Common myeloid progenitor, CD34-positive (primary cell): ENCODE measurements at regions of chr17 and their contacts with region 1.

Region 1: GRCh38 chr17:64399071-64399766 is 8.6 kb upstream of the PECAM1 start:
- DNase-seq: no peak
- H3K4me3 ChIP-seq: peak overlapping the region in 1 of 7 experiments; percentile 23
- H3K27ac ChIP-seq: no peak overlapping the region
- H3K4me1 ChIP-seq: peaks cover 24 to 79% (median 66%) of the 10 kb centered on the region in 4 experiments
- H3K27me3 ChIP-seq: no peaks in the 10 kb centered on the region

Region 2: GRCh38 chr17:64411999-64412771 is 13.0 kb after region 1 on chr17:
- CTCF ChIA-PET with region 1: interaction called, 22 read pairs
- POLR2A ChIA-PET with region 1: no interaction called
- DNase-seq: peak; percentile 64 to 91 (median 86)
- H3K4me3 ChIP-seq: peak overlapping the region; percentile 2 to 73 (median 49)
- H3K27ac ChIP-seq: peak overlapping the region; percentile 4 to 77
- H3K4me1 ChIP-seq: peaks cover 13 to 46% (median 39%) of the 10 kb centered on the region in 4 experiments
- H3K27me3 ChIP-seq: no peaks in the 10 kb centered on the region